ENCODE measurements at regions of chr19 and their contacts with region 1.

Region 1: DNA sequence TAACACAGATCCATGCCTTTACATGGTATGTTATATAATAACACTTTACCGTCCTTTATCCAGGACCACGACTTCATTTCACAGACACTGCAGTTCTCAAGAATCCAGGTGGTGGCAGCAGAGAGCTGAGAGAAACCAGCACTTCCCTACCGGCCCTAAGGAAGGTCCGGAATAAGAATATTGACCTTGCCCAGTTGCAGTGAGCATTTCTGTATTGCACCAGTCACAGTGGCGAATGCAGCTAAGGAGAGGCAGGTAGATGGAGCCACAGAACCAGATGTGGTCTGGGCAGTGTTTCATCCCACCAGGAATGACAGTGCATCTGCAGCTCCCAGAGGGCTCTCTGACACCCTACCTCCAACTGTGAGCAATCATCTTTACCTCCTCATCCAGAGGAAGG is 44.6 kb downstream of the ZNF787 start:
- DNase-seq: peak; percentile 48
- H3K4me3 ChIP-seq: no peak overlapping the region
- H3K27ac ChIP-seq: no peak overlapping the region
- H3K4me1 ChIP-seq: peaks cover 0 to 25% (median 13%) of the 10 kb centered on the region in 6 donors
- H3K27me3 ChIP-seq: peaks cover 0 to 4% (median 0%) of the 10 kb centered on the region in 7 donors
- CTCF ChIP-seq: peak; percentile 54 to 88 (median 79)
- POLR2A ChIP-seq: no peak

Region 2: GRCh38 chr19:56170261-56170660 is 93.8 kb after region 1 on chr19:
- intact Hi-C with region 1: loop called (anchors 5 kb)
- DNase-seq: no peak
- H3K4me3 ChIP-seq: no peak overlapping the region
- H3K27ac ChIP-seq: no peak overlapping the region
- H3K4me1 ChIP-seq: peaks cover 0 to 18% (median 5%) of the 10 kb centered on the region in 6 donors
- H3K27me3 ChIP-seq: peaks cover 0 to 35% (median 0%) of the 10 kb centered on the region in 7 donors
- CTCF ChIP-seq: no peak
- POLR2A ChIP-seq: no peak

Region 3: GRCh38 chr19:56252699-56253422 is 176.4 kb after region 1 on chr19:
- intact Hi-C with region 1: loop called (anchors 10 kb)
- DNase-seq: peak; percentile 92
- H3K4me3 ChIP-seq: no peak overlapping the region
- H3K27ac ChIP-seq: no peak overlapping the region
- H3K4me1 ChIP-seq: no peaks in the 10 kb centered on the region
- H3K27me3 ChIP-seq: no peaks in the 10 kb centered on the region
- CTCF ChIP-seq: peak; percentile 55 to 88 (median 81)
- POLR2A ChIP-seq: no peak

Region 4: DNA sequence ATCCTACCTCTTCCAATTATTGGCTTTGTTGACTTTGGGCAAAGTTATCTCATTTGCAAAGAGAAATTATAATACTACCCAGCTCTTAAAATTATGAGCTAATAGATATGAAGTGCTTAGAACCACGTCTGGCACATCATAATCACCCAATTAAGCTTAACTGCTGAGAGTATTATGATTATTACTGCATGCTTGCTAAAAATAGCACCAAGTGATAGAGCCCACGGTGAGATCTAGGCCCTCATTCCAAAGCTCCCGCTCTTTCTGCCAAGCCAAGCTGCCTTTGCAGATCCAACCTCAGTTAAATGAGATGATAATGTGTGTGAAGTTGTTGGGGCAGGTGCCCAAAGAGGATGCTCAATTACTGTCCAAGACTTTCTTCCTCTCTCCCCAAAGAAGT is 189.6 kb after region 1 on chr19:
- intact Hi-C with region 1: no loop called
- DNase-seq: no peak
- H3K4me3 ChIP-seq: no peak overlapping the region
- H3K27ac ChIP-seq: no peak overlapping the region
- H3K4me1 ChIP-seq: no peaks in the 10 kb centered on the region
- H3K27me3 ChIP-seq: no peaks in the 10 kb centered on the region
- CTCF ChIP-seq: no peak
- POLR2A ChIP-seq: no peak

Region 5: GRCh38 chr19:56348289-56348877 is 271.9 kb after region 1 on chr19:
- intact Hi-C with region 1: loop called (anchors 10 kb)
- DNase-seq: no peak
- H3K4me3 ChIP-seq: no peak overlapping the region
- H3K27ac ChIP-seq: no peak overlapping the region
- H3K4me1 ChIP-seq: no peaks in the 10 kb centered on the region
- H3K27me3 ChIP-seq: no peaks in the 10 kb centered on the region
- CTCF ChIP-seq: peak in 1 of 11 experiments; percentile 8
- POLR2A ChIP-seq: no peak

Region 6: GRCh38 chr19:56383826-56384605 is 307.5 kb after region 1 on chr19:
- intact Hi-C with region 1: no loop called
- DNase-seq: no peak
- H3K4me3 ChIP-seq: no peak overlapping the region
- H3K27ac ChIP-seq: no peak overlapping the region
- H3K4me1 ChIP-seq: no peaks in the 10 kb centered on the region
- H3K27me3 ChIP-seq: no peaks in the 10 kb centered on the region
- CTCF ChIP-seq: no peak
- POLR2A ChIP-seq: no peak

Measured in spleen (tissue), 13 donors.